B cell (primary cell): ENCODE measurements at regions of chr20 and their contacts with region 1.

Region 1: DNA sequence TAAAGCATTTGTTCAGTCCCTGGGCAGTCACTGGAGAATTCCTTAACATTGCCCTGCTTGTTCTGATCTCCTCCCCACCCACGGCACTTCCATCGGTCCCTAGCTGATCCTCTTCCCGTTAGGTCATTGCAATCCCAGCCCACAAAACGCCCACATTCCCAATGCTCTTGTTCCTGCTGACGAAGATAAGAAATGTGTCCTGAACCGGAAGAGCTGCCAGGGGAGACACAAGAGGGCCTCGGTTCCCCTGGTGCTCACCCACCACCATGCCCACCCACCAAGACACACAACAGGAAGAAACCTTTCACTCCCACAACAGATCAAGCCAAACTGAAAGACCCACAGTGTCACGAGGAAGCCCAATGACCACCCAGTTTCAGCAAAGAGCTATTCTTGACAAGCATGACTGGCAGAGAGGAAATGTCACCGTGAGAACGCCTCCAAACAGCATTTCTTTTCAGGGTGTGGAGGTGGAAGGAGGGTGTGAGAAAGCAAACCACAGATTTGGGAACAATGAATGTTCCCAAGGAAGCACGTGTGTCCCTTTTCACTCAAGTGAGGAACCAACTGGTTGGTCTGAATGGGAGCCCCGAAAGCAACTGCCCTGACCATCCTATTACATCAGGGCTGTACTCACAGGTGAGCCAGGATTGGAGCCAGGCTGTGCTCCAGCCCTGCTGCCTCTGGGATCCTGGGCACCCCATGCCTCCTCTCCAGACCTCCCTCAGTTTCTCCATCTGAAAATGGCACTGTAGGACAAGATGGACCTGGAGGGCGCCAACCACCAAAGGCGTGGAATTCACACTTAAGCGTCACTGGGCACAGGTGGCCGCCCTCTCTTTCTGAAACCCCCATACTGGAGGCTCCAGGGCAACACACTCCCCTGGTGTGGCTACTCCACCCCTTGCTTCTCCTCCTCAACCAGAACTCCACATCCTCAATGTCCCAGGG is 97.5 kb downstream of the ZMYND8 start:
- DNase-seq: peak; percentile 78
- ATAC-seq: peak; percentile 31
- H3K4me3 ChIP-seq: peak overlapping the region in 1 of 5 experiments; percentile 8
- H3K4me3 Mint-ChIP-seq: peak overlapping the region; percentile 81
- H3K27ac ChIP-seq: peak overlapping the region; percentile 75 to 78
- H3K27ac Mint-ChIP-seq: peak overlapping the region; percentile 93
- H3K4me1 ChIP-seq: peaks cover 53 to 62% of the 10 kb centered on the region in 2 donors
- H3K4me1 Mint-ChIP-seq: peaks cover 69% of the 10 kb centered on the region
- H3K27me3 ChIP-seq: no peaks in the 10 kb centered on the region
- H3K27me3 Mint-ChIP-seq: no peaks in the 10 kb centered on the region
- CTCF ChIP-seq: no peak

Region 2: DNA sequence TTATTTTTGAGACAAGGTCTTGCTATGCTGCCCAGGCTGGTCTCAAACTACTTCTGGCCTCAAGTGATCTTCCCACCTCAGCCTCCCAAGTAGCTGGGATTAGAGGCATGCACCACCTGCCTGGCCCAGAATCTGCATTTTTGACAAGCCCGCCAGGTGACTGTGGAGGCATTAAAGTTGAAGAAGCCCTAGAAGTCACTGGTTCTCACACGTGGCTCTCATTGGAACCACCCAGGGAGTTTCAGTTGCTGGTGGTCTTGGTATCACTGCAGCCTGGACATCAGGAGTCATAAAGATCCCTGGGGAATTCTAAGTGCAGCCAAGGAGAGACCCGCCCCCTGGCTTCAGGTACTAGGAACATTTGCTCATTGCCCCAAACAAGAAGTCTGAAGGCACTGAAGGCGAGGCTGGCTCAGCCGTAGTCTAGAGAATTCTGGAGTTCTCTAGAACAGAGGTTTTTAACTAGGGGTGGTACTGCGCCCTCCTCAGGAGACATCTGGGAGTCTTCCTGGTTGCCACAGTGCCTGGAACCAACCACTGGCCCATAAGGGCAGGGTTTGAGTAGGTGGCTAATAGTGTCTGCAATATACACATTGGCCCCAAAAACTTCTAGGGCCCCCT is 85.3 kb before region 1 on chr20:
- CTCF ChIA-PET with region 1: no interaction called
- POLR2A ChIA-PET with region 1: no interaction called
- intact Hi-C with region 1: no loop called
- DNase-seq: no peak
- ATAC-seq: no peak
- H3K4me3 ChIP-seq: no peak overlapping the region
- H3K4me3 Mint-ChIP-seq: no peak overlapping the region
- H3K27ac ChIP-seq: no peak overlapping the region
- H3K27ac Mint-ChIP-seq: no peak overlapping the region
- H3K4me1 ChIP-seq: no peaks in the 10 kb centered on the region
- H3K4me1 Mint-ChIP-seq: no peaks in the 10 kb centered on the region
- H3K27me3 ChIP-seq: peaks cover 0 to 5% (median 3%) of the 10 kb centered on the region in 4 experiments
- H3K27me3 Mint-ChIP-seq: peaks cover 19% of the 10 kb centered on the region
- CTCF ChIP-seq: no peak

Region 3: DNA sequence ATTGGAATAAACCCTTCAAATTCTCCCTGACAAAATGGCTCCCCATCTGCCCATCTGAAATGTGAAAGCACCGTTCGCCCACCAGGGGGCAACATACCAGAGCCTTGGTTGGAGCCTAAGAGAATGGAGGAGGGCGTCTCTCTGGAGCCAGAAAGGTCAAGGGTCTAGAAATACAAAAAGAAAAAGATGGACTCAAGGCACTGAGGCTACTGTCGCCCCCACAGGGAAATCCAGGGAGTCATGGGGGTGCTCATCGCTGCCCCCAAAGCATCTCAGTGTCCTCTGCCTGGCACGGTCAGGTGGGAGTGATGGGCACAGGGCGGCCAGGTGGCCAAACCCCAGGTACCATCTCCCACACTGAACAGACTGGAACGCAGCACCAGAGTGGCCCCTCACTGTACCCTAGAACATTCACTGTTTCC is 38.8 kb before region 1 on chr20:
- CTCF ChIA-PET with region 1: interaction called, 5 read pairs
- POLR2A ChIA-PET with region 1: no interaction called
- intact Hi-C with region 1: loop called (anchors 1 kb)
- DNase-seq: peak; percentile 60
- ATAC-seq: peak; percentile 39
- H3K4me3 ChIP-seq: no peak overlapping the region
- H3K4me3 Mint-ChIP-seq: no peak overlapping the region
- H3K27ac ChIP-seq: no peak overlapping the region
- H3K27ac Mint-ChIP-seq: peak overlapping the region; percentile 63
- H3K4me1 ChIP-seq: no peaks in the 10 kb centered on the region
- H3K4me1 Mint-ChIP-seq: peaks cover 5% of the 10 kb centered on the region
- H3K27me3 ChIP-seq: no peaks in the 10 kb centered on the region
- H3K27me3 Mint-ChIP-seq: no peaks in the 10 kb centered on the region
- CTCF ChIP-seq: peak; percentile 76